ENCODE measurements at regions of chr1 and their contacts with region 1.

Region 1: GRCh38 chr1:245677461-245678240 is 522.9 kb downstream of the KIF26B start:
- DNase-seq: no peak
- H3K4me3 ChIP-seq: no peak overlapping the region
- H3K27ac ChIP-seq: no peak overlapping the region
- H3K27me3 ChIP-seq: no peaks in the 10 kb centered on the region
- CTCF ChIP-seq: no peak

Region 2: DNA sequence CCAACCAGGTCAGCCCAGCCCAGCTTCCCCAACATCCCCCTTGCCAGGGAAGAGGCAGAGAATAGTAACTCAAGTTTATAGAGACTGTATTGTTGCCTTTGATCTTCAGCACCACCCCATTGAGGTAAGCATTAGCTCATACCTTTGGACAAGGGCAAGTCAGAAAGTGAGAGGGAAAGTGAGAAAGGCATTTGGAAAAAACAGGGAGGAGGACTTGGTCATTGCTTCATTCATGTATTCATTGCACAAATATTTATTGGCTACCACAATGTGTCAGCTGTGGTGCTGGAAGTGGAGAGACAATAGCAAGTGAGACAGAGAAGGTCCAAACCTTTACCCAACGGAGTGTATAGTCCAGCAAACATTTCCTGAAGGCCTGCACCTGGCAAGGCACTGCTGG is 38.3 kb after region 1 on chr1:
- intact Hi-C with region 1: loop called in 1 of 2 experiments (anchors 2 kb)
- DNase-seq: no peak
- H3K4me3 ChIP-seq: no peak overlapping the region
- H3K27ac ChIP-seq: no peak overlapping the region
- H3K27me3 ChIP-seq: no peaks in the 10 kb centered on the region
- CTCF ChIP-seq: no peak

Region 3: DNA sequence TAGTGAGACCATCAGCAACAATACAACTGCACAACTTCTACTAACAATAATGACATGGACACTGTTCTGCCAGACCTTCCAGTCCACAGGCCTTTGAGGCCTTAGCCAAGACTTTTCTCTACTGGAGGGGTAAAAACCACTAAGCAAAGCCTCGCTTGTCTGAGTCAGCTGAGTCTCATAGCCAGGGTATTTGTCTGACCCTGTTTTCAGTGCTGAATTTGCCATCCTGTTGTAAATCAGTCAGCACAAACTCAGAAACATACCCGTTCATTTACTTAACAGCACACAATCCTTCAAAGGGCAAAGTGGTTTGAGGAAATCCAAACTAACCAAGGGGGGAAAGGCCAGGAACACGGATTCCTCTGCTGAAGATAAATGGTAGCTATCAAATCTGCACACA is 291.6 kb after region 1 on chr1:
- intact Hi-C with region 1: no loop called
- DNase-seq: no peak
- H3K4me3 ChIP-seq: no peak overlapping the region
- H3K27ac ChIP-seq: no peak overlapping the region
- H3K27me3 ChIP-seq: no peaks in the 10 kb centered on the region
- CTCF ChIP-seq: no peak

Region 4: GRCh38 chr1:246161626-246162025 is 484.0 kb after region 1 on chr1:
- intact Hi-C with region 1: no loop called
- DNase-seq: no peak
- H3K4me3 ChIP-seq: no peak overlapping the region
- H3K27ac ChIP-seq: no peak overlapping the region
- H3K27me3 ChIP-seq: no peaks in the 10 kb centered on the region
- CTCF ChIP-seq: no peak